ENCODE measurements at regions of chr20 and their contacts with region 1.

Region 1: GRCh38 chr20:1616858-1617434 is 2.9 kb downstream of the SIRPB1 start:
- DNase-seq: no peak
- H3K4me3 ChIP-seq: no peak overlapping the region
- H3K4me3 Mint-ChIP-seq: no peak overlapping the region
- H3K27ac ChIP-seq: no peak overlapping the region
- H3K27ac Mint-ChIP-seq: no peak overlapping the region
- H3K4me1 ChIP-seq: peaks cover 28% of the 10 kb centered on the region
- H3K4me1 Mint-ChIP-seq: peaks cover 29 to 45% (median 36%) of the 10 kb centered on the region in 4 donors
- H3K27me3 ChIP-seq: no peaks in the 10 kb centered on the region
- H3K27me3 Mint-ChIP-seq: no peaks in the 10 kb centered on the region

Region 2: DNA sequence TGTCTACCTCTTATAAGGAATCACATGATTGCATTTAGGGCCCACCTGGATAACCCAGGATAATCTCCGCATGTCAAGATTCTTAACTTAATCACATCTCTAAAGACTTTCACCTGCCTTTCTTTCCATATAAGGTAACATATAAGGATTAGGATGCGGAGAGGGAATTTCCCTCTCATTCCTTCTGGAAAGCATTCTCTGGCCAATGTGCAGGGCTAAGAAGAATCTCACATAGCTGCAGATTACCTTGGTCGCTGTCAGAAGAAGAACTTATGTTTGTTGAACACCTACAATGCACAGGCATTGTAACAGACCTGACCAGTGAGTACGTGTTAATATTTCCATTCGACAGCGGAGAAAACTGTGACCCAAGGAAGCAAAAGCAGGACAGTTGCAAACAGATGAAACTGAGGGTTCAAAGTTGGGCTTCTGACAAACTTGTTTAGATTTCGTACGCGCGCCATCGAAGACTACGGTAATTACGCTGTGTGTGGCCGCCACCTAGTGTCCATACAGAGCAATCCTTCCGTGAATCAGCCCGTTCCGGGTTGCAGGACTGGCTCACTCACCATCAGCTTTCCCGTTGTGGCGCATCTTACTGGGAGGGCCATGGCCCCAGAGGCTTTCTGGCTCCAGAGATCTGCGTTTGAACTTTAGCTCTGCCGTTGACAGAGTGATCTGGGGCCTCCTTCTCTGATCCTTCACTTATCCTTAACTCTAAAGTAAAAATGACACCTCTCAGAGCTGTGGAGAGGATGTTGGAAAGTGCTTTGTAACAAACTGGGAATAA is 404.1 kb before region 1 on chr20:
- CTCF ChIA-PET with region 1: no interaction called
- POLR2A ChIA-PET with region 1: no interaction called
- intact Hi-C with region 1: no loop called
- DNase-seq: peak; percentile 52 to 63 (median 60)
- H3K4me3 ChIP-seq: no peak overlapping the region
- H3K4me3 Mint-ChIP-seq: peak overlapping the region in 7 of 8 donors; percentile 4 to 52 (median 26)
- H3K27ac ChIP-seq: no peak overlapping the region
- H3K27ac Mint-ChIP-seq: peak overlapping the region in 1 of 7 donors; percentile 13
- H3K4me1 ChIP-seq: peaks cover 33% of the 10 kb centered on the region
- H3K4me1 Mint-ChIP-seq: peaks cover 19 to 28% (median 25%) of the 10 kb centered on the region in 4 donors
- H3K27me3 ChIP-seq: no peaks in the 10 kb centered on the region
- H3K27me3 Mint-ChIP-seq: peaks cover 3 to 6% of the 10 kb centered on the region in 2 donors

Region 3: GRCh38 chr20:1313236-1313964 is 303.5 kb before region 1 on chr20:
- CTCF ChIA-PET with region 1: no interaction called
- POLR2A ChIA-PET with region 1: no interaction called
- intact Hi-C with region 1: no loop called
- DNase-seq: peak; percentile 54 to 59 (median 54)
- H3K4me3 ChIP-seq: no peak overlapping the region
- H3K4me3 Mint-ChIP-seq: no peak overlapping the region
- H3K27ac ChIP-seq: no peak overlapping the region
- H3K27ac Mint-ChIP-seq: peak overlapping the region in 1 of 7 donors; percentile 54
- H3K4me1 ChIP-seq: peaks cover 8% of the 10 kb centered on the region
- H3K4me1 Mint-ChIP-seq: peaks cover 4 to 10% (median 7%) of the 10 kb centered on the region in 4 donors
- H3K27me3 ChIP-seq: no peaks in the 10 kb centered on the region
- H3K27me3 Mint-ChIP-seq: no peaks in the 10 kb centered on the region

Region 4: DNA sequence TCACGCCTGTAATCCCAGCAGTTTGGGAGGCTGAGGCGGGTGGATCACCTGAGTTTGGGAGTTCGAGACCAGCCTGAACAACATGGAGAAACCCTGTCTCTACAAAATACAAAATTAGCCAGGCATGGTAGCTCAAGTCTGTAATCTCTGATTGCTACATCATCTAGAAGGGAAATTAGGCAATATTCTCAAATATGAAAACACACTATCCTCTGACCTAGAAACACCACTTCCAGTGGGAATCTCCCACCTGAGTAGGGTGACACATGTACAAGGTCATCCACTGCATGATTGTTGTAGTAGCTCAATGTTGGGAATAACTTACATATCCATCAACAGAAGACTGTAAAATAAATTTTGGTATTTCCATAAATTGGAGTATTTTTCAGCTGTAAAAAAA is 40.3 kb before region 1 on chr20:
- CTCF ChIA-PET with region 1: no interaction called
- POLR2A ChIA-PET with region 1: interaction called, 3 read pairs
- intact Hi-C with region 1: loop called (anchors 2 kb)
- DNase-seq: no peak
- H3K4me3 ChIP-seq: no peak overlapping the region
- H3K4me3 Mint-ChIP-seq: no peak overlapping the region
- H3K27ac ChIP-seq: no peak overlapping the region
- H3K27ac Mint-ChIP-seq: peak overlapping the region in 1 of 7 donors; percentile 7
- H3K4me1 ChIP-seq: no peaks in the 10 kb centered on the region
- H3K4me1 Mint-ChIP-seq: no peaks in the 10 kb centered on the region
- H3K27me3 ChIP-seq: no peaks in the 10 kb centered on the region
- H3K27me3 Mint-ChIP-seq: no peaks in the 10 kb centered on the region